ENCODE measurements at regions of chr17 and their contacts with region 1.

Region 1: DNA sequence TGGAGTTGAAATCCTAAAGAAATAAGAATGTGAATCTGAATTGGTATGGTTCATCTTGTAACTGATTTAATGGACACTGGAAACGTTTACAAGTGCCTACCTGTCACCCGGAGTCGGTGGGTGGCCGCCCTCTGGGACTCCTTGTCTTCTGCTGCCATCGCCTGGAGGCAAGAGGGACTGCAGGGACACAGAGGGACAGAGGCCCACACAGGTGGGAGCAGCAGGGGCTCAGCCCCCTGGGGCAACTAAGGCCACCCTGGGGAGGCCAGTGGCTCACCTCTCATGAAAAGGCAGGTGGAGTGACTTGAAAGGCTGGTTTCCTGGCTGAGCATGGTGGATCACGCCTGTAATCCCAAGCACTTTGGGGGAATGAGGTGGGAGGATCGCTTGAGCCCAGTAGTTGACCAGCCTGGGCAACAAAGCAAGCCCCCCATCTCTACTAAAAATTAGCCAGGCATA is 23.2 kb downstream of the TMEM92 start:
- DNase-seq: peak; percentile 57 to 63
- ATAC-seq: peak; percentile 77 to 87
- H3K4me3 ChIP-seq: no peak overlapping the region
- H3K27ac ChIP-seq: no peak overlapping the region
- H3K4me1 ChIP-seq: no peaks in the 10 kb centered on the region
- H3K27me3 ChIP-seq: peaks cover 0 to 2% (median 0%) of the 10 kb centered on the region in 3 donors
- CTCF ChIP-seq: peak; percentile 82 to 93 (median 91)
- POLR2A ChIP-seq: no peak

Region 2: DNA sequence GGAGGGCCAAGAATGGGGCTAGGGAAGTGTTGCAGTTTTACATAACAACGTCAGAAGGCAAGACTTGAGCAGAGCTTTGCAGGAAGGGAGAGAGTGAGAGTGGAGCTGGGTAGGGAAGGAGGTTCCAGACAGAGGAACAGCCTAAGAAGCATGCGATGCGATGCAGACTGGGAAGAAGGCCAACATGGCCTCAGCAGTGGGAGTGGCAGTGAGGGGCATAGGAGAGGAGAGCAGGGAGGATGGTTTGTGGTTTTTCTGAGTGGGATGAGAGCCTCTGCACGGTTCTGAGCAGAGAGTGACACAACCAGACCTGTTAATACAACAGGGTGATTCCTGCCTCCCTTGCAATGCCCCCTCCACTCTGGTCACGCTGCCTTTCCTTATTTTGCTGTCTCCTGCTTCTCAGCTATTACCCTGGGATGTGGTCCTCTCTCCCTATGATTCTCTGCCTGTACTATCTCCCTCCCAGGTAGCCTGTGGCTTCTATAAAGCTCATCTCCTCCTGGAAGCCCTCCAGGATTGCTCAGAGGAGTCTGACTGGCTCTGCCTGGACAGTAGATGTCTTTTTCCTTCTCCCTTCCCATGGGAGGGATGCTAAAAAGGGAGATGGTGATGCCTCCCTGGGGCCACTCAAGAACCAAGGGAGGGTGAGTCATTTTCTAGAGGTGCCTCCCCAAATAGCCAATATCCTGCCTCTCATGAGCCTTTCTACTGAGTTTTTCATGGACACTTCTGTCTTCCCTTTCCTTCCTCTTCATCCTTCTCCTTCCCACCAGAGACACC is 841.1 kb before region 1 on chr17:
- in situ Hi-C with region 1: no loop called
- intact Hi-C with region 1: no loop called
- DNase-seq: no peak
- ATAC-seq: no peak
- H3K4me3 ChIP-seq: no peak overlapping the region
- H3K27ac ChIP-seq: no peak overlapping the region
- H3K4me1 ChIP-seq: no peaks in the 10 kb centered on the region
- H3K27me3 ChIP-seq: no peaks in the 10 kb centered on the region
- CTCF ChIP-seq: no peak
- POLR2A ChIP-seq: no peak

Region 3: GRCh38 chr17:50026901-50027630 is 270.4 kb before region 1 on chr17:
- in situ Hi-C with region 1: loop called in 1 of 4 experiments (anchors 10 kb)
- intact Hi-C with region 1: no loop called
- DNase-seq: peak; percentile 59 to 69
- ATAC-seq: peak; percentile 83 to 85
- H3K4me3 ChIP-seq: no peak overlapping the region
- H3K27ac ChIP-seq: no peak overlapping the region
- H3K4me1 ChIP-seq: peaks cover 0 to 5% of the 10 kb centered on the region in 2 donors
- H3K27me3 ChIP-seq: no peaks in the 10 kb centered on the region
- CTCF ChIP-seq: peak; percentile 89 to 98 (median 97)
- POLR2A ChIP-seq: no peak

Region 4: DNA sequence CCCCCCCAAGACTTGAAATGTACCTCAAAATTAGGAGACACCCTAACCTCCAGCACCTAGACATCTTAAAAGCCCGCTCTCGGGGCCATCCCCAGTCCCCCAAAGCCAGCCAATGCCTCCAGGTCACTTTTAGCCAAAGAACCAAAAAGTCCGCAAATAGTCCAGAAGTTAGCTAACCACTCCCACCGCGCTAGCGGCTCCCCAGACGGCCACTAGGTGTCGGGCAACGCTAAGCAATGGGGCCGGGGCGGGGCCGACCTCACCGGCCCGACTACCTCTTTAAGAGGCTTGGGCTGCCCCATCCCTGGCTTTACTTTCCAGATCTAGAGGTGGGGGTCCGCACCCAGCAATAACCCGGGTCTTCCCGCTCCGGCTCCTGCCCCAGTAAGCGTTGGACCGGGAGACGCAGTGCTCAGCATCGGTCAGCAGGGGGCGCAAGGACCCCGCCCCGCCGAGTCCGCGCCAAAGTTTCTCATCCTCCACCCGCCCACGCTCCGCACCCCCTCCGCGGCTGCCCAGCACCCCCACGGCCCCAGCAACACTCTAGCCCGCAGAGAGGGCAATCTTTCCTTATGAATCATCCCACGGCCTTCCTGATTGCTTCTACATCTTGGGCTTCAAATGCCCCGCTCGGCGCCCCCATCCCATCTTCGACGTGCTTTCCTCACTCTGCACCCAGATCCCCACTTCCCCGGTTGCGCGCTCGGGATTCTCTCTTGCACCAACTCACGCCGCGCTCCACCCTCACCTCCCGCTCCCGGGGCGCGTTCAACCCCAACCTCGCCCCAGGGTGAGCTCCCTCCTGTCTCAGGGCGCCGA is 96.8 kb before region 1 on chr17:
- in situ Hi-C with region 1: loop called in 1 of 4 experiments (anchors 5 kb)
- intact Hi-C with region 1: loop called (anchors 1 kb)
- DNase-seq: peak; percentile 63 to 79
- ATAC-seq: peak; percentile 74 to 76
- H3K4me3 ChIP-seq: peak overlapping the region; percentile 50 to 74 (median 60)
- H3K27ac ChIP-seq: peak overlapping the region; percentile 60 to 76 (median 63)
- H3K4me1 ChIP-seq: peaks cover 0 to 8% of the 10 kb centered on the region in 2 donors
- H3K27me3 ChIP-seq: peaks cover 13 to 22% (median 17%) of the 10 kb centered on the region in 3 donors
- CTCF ChIP-seq: peak; percentile 100
- POLR2A ChIP-seq: no peak

Region 5: DNA sequence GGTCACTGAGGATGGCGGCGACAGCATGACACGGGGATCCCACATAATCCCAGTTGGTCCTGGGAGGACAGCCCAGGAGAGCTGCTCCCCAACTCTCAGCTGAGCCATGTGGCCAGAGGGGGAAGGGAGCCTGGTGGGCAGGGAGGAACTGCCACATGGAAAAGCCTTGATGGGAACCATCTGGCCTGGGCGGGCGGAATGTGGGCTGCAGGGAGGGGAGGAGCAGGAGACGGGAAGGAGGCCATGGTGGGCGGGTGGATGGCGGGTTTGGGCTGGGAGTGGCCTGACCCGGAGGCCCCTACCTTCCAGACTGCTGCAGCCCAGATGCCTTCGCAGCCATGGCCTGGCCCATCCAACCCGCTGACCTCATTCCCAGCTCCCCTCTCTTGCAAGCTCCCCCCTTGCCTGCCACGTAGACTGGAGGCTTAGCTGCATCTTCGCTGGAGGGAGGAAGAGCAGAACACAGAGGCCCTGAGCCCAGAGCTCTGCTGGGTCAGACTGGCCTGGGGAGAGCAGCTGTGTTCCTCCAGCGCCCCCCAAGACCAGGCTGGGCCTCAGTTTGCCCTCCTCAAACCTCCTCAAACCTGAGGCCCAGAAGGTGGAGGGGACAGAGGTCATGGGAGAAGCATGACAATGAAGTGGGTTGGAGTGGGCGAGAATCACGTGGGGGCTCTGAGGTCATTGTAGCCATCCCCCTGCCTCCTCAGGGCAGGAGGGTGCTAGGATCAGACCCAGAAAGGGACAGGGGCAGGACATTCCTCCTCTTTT is 87.8 kb before region 1 on chr17:
- in situ Hi-C with region 1: loop called in 1 of 4 experiments (anchors 5 kb)
- intact Hi-C with region 1: no loop called
- DNase-seq: peak; percentile 49 to 71
- ATAC-seq: peak; percentile 51 to 53
- H3K4me3 ChIP-seq: no peak overlapping the region
- H3K27ac ChIP-seq: peak overlapping the region; percentile 54 to 74 (median 58)
- H3K4me1 ChIP-seq: peaks cover 4 to 15% of the 10 kb centered on the region in 2 donors
- H3K27me3 ChIP-seq: peaks cover 8 to 30% (median 28%) of the 10 kb centered on the region in 3 donors
- CTCF ChIP-seq: no peak
- POLR2A ChIP-seq: peak in 1 of 2 donors; percentile 37

Region 6: GRCh38 chr17:50816771-50817751 is 519.6 kb after region 1 on chr17:
- in situ Hi-C with region 1: no loop called
- intact Hi-C with region 1: no loop called
- DNase-seq: peak in 1 of 2 donors; percentile 29
- ATAC-seq: peak; percentile 71 to 76
- H3K4me3 ChIP-seq: peak overlapping the region in 1 of 4 donors; percentile 34
- H3K27ac ChIP-seq: no peak overlapping the region
- H3K4me1 ChIP-seq: peaks cover 0 to 6% of the 10 kb centered on the region in 2 donors
- H3K27me3 ChIP-seq: no peaks in the 10 kb centered on the region
- CTCF ChIP-seq: peak; percentile 62 to 88 (median 80)
- POLR2A ChIP-seq: no peak